CD4-positive, alpha-beta T cell (primary cell): ENCODE measurements at regions of chr10 and their contacts with region 1.

Region 1: DNA sequence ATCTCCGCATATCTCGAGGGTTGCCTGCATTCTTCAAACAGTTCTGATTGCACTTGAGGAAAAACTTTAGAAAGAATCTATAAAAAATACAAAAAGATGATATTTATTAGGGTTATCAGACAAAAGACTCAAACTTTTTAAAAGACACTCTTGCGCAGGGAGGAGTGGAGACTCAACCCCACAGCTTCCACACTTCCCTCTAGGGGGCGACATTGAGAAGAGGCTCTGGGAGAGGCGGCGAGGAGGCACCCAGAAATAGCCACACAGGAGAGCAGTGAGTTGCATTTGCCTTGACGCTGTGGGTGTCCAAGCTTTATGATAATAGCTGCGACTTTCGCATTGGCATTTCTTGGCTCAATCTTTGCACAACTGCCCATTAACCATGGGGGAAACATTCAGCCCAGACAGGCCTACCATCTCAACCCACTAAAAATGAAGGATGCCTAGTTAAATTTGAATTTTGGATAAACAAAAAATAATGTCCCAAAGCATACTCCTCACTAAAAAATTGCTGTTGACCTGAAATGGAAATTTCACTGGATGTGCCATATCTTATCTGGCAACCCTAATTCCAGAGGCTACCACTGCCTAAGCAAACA is 86.2 kb downstream of the EBF3 start:
- DNase-seq: peak in 9 of 14 experiments; percentile 5 to 54 (median 40)
- ATAC-seq: no peak
- H3K4me3 ChIP-seq: no peak overlapping the region
- H3K4me3 Mint-ChIP-seq: no peak overlapping the region
- H3K27ac ChIP-seq: no peak overlapping the region
- H3K27ac Mint-ChIP-seq: no peak overlapping the region
- H3K4me1 ChIP-seq: no peaks in the 10 kb centered on the region
- H3K4me1 Mint-ChIP-seq: no peaks in the 10 kb centered on the region
- H3K27me3 ChIP-seq: peaks cover 0 to 2% of the 10 kb centered on the region in 2 experiments
- H3K27me3 Mint-ChIP-seq: no peaks in the 10 kb centered on the region
- CTCF ChIP-seq: peak; percentile 42

Region 2: DNA sequence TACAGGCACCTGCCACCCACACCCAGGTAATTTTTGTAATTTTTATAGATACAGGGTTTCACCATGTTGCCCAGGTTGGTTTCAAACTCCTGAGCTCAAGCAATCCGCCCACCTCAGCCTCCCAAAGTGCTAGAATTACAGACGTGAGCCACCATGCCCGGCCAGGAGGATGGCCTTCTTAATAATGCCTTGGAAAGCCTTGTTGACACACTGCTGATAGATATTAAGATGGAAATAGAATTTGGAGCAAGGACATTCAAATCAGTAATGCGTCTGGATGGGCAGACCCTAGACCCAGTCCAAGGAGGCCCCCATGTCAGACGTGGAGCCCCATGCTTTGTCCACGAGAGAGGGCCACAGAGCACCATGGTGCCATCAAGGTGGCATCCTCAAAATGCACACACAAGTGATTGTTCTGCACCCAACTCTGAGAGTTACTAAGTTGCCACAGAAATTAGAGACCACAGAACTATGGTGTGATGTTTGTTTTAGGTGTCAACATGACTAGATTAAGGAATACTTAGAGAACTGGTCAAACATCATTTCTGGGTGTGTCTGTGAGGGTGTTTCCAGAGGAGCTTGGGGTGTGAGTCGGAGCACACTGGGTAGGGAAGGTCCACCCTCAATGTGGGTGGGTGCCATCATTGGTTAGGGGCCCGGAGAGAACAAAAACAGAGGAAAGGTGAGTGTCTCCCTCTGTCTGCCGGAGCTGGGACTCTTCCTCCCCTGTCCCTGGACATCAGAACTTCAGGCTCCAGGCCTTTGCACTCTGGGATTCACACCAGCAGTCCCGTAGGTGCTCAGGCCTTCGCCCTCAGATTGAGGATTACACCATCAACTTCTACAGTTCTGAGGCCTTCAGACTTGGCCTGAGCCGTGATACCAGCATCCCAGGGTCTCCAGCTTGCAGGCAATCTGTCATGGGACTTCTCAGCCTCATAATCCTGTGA is 51.7 kb after region 1 on chr10:
- CTCF ChIA-PET with region 1: no interaction called
- POLR2A ChIA-PET with region 1: no interaction called
- intact Hi-C with region 1: no loop called
- DNase-seq: no peak
- ATAC-seq: no peak
- H3K4me3 ChIP-seq: no peak overlapping the region
- H3K4me3 Mint-ChIP-seq: no peak overlapping the region
- H3K27ac ChIP-seq: no peak overlapping the region
- H3K27ac Mint-ChIP-seq: no peak overlapping the region
- H3K4me1 ChIP-seq: no peaks in the 10 kb centered on the region
- H3K4me1 Mint-ChIP-seq: no peaks in the 10 kb centered on the region
- H3K27me3 ChIP-seq: no peaks in the 10 kb centered on the region
- H3K27me3 Mint-ChIP-seq: no peaks in the 10 kb centered on the region
- CTCF ChIP-seq: no peak

Region 3: GRCh38 chr10:130127364-130128061 is 249.6 kb after region 1 on chr10:
- CTCF ChIA-PET with region 1: no interaction called
- POLR2A ChIA-PET with region 1: no interaction called
- intact Hi-C with region 1: loop called (anchors 1 to 2 kb)
- DNase-seq: peak in 13 of 14 experiments; percentile 29 to 80 (median 39)
- ATAC-seq: peak; percentile 93
- H3K4me3 ChIP-seq: no peak overlapping the region
- H3K4me3 Mint-ChIP-seq: no peak overlapping the region
- H3K27ac ChIP-seq: no peak overlapping the region
- H3K27ac Mint-ChIP-seq: no peak overlapping the region
- H3K4me1 ChIP-seq: peaks cover 4% of the 10 kb centered on the region
- H3K4me1 Mint-ChIP-seq: peaks cover 5% of the 10 kb centered on the region
- H3K27me3 ChIP-seq: peaks cover 7 to 17% of the 10 kb centered on the region in 2 experiments
- H3K27me3 Mint-ChIP-seq: peaks cover 33% of the 10 kb centered on the region
- CTCF ChIP-seq: peak; percentile 92